HepG2 (cell line): ENCODE measurements at regions of chr3 and their contacts with region 1.

Region 1: DNA sequence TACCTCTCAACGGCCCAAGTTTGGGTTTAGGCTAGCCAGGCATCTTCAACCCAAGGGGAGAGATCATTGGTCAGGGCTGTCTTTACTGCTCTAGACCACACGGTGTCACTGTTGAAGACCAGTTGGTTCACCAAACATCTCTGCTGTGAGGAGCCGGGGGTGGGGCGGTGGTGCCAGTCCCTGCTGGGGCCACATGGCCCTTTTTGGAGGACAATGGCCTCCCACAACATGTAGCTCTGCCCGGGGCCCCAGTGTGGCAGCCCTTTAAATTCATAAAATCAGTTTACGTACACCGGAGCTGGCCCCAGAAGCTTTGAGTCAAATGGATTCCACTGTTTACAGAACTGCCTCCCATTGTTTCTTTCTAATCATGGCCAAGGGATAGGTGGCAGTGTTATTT is 19.1 kb upstream of the TM4SF18 start:
- DNase-seq: peak; percentile 67
- ATAC-seq: peak; percentile 60
- H3K4me3 ChIP-seq: no peak overlapping the region
- H3K27ac ChIP-seq: peak overlapping the region; percentile 99
- H3K4me1 ChIP-seq: peaks cover 60% of the 10 kb centered on the region
- H3K27me3 ChIP-seq: no peaks in the 10 kb centered on the region
- CTCF ChIP-seq: peak; percentile 94
- EP300 ChIP-seq: no peak; a peak in 1 of 4 replicates
- POLR2A ChIP-seq: no peak
- RAD21 ChIP-seq: peak; percentile 92

Region 2: GRCh38 chr3:149366941-149367840 is 14.6 kb after region 1 on chr3:
- CTCF ChIA-PET with region 1: no interaction called
- POLR2A ChIA-PET with region 1: interaction called, 136 read pairs
- in situ Hi-C with region 1: no loop called
- intact Hi-C with region 1: loop called (anchors 1 kb)
- DNase-seq: peak; percentile 88
- ATAC-seq: peak; percentile 89
- H3K4me3 ChIP-seq: no peak overlapping the region
- H3K27ac ChIP-seq: peak overlapping the region; percentile 67
- H3K4me1 ChIP-seq: peaks cover 81% of the 10 kb centered on the region
- H3K27me3 ChIP-seq: no peaks in the 10 kb centered on the region
- CTCF ChIP-seq: no peak
- EP300 ChIP-seq: 0 out of 4 replicates have a peak, but pooled peaks of 1 of the 2 experiments have one; percentile 10
- POLR2A ChIP-seq: peak in 1 of 2 experiments; percentile 72; a peak in 1 of 4 replicates
- RAD21 ChIP-seq: no peak

Region 3: GRCh38 chr3:149377408-149378377 is 25.1 kb after region 1 on chr3 and contains the start of gene TM4SF1:
- CTCF ChIA-PET with region 1: interaction called, 3 read pairs
- POLR2A ChIA-PET with region 1: interaction called, 136 read pairs
- in situ Hi-C with region 1: no loop called
- intact Hi-C with region 1: loop called (anchors 2 kb)
- DNase-seq: peak; percentile 97
- ATAC-seq: peak; percentile 91
- H3K4me3 ChIP-seq: peak within 1 kb of the TSS; percentile 78 to 97 (median 82)
- H3K27ac ChIP-seq: peak within 1 kb of the TSS; percentile 92
- H3K4me1 ChIP-seq: peaks cover 61% of the 10 kb centered on the region
- H3K27me3 ChIP-seq: peaks cover 0 to 3% of the 10 kb centered on the region in 2 experiments; a peak in 1 of 5 replicates
- CTCF ChIP-seq: no peak
- EP300 ChIP-seq: peak; percentile 73 to 80; a peak in 3 of 4 replicates
- POLR2A ChIP-seq: peak; percentile 96 to 100
- RAD21 ChIP-seq: no peak; the same call in 1 of the 2 replicates
- total RNA-seq, gene TM4SF1: 226 and 431 TPM in 2 replicates

Region 4: DNA sequence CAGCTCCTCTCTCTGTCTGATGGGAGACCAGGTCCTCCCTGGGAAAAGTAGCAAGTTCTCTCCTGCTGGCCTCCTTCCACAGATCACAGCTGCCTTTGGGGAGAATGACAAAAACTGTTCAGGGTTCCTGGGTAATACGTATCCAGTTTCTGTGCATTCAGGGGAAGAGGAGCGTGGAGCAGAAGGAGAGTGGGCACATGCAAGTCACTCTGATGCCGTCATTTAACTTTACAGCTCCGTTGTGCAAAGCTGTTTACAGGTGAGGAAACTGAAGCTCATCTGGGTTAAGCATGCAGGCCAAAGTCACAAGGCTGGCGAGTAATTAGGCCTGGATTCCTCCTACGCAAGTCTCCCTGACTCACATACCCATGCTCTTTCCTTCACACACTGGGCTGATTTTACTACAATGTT is 32.4 kb after region 1 on chr3:
- CTCF ChIA-PET with region 1: no interaction called
- POLR2A ChIA-PET with region 1: interaction called, 144 read pairs
- in situ Hi-C with region 1: loop called (anchors 5 kb)
- intact Hi-C with region 1: no loop called
- DNase-seq: peak; percentile 78
- ATAC-seq: peak; percentile 23
- H3K4me3 ChIP-seq: peak overlapping the region; percentile 42 to 69 (median 66)
- H3K27ac ChIP-seq: peak overlapping the region; percentile 100
- H3K4me1 ChIP-seq: peaks cover 84% of the 10 kb centered on the region
- H3K27me3 ChIP-seq: no peaks in the 10 kb centered on the region; a peak in 1 of 5 replicates
- CTCF ChIP-seq: no peak
- EP300 ChIP-seq: peak in 1 of 2 experiments; percentile 39; a peak in 1 of 4 replicates
- POLR2A ChIP-seq: peak; percentile 63 to 71
- RAD21 ChIP-seq: no peak

Region 5: DNA sequence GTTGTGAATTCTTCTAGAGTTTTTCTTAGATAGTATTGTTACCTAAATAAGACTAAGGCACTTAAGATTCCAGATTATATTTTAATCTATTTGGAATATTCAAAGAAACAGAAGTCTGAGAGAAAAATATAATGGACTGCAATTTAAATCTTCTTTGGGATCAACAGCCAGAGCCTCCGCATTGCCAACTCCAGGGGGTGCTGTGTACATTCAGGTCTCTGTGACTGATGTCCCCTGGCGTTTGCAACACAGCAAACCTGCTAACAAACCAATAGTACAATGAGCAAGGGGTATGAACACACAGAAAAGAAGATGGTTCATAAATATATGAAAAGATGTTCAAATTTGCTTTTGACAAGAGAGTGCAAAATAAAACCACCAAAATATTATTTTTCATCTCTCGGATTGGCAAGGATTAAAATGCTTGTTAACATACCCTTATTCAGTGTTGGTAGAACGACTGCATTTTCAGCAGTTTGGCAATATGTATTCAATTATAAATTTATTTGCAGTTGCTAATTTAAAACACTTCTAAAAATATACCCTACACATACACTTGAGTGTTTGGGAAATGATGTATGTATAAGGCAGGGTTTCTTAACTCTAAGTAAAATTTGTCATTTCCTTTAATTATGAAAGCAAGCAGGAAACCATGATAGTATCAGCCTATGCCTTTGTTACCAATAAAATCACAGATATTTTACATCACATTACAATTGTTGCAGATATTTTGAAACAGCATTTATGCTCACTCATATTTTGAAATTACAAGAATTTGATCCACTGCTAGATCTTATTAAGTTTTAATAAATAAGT is 41.0 kb after region 1 on chr3:
- CTCF ChIA-PET with region 1: interaction called, 8 read pairs
- POLR2A ChIA-PET with region 1: interaction called, 144 read pairs
- in situ Hi-C with region 1: loop called (anchors 5 kb)
- intact Hi-C with region 1: loop called (anchors 2 kb)
- DNase-seq: peak; percentile 81
- ATAC-seq: peak; percentile 86
- H3K4me3 ChIP-seq: no peak overlapping the region
- H3K27ac ChIP-seq: no peak overlapping the region
- H3K4me1 ChIP-seq: peaks cover 98% of the 10 kb centered on the region
- H3K27me3 ChIP-seq: no peaks in the 10 kb centered on the region
- CTCF ChIP-seq: peak; percentile 86
- EP300 ChIP-seq: no peak
- POLR2A ChIP-seq: no peak
- RAD21 ChIP-seq: peak; percentile 94

Region 6: DNA sequence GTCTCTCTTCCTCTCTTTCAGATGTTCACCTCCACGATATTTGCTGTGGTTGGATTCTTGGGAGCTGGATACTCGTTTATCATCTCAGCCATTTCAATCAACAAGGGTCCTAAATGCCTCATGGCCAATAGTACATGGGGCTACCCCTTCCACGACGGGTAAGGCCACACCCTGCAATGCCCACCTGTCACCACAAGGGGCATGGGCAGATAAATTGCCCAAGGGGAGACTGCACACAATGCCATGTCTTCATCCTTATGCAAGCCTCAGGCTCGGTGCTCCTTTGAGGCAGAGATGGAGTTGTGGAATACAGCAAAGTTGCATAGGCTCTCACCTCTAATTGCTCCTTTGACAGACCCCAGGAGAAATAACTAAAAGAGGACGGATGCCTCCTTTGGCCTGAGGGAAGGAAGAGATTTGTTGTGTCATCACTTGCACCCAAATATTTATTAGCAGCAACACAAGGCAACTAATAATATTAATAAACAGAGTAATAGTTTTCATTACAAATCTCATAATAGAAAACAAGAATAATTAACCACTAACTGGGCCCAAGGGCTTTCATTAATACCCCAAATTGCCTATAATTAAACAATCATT is 135.1 kb after region 1 on chr3:
- CTCF ChIA-PET with region 1: interaction called, 6 read pairs
- POLR2A ChIA-PET with region 1: no interaction called
- in situ Hi-C with region 1: loop called (anchors 5 kb)
- intact Hi-C with region 1: loop called (anchors 2 kb)
- DNase-seq: no peak
- ATAC-seq: peak; percentile 78
- H3K4me3 ChIP-seq: no peak overlapping the region
- H3K27ac ChIP-seq: no peak overlapping the region
- H3K4me1 ChIP-seq: peaks cover 12% of the 10 kb centered on the region
- H3K27me3 ChIP-seq: no peaks in the 10 kb centered on the region
- CTCF ChIP-seq: peak; percentile 51
- EP300 ChIP-seq: no peak
- POLR2A ChIP-seq: no peak
- RAD21 ChIP-seq: no peak